ENCODE measurements at regions of chr6 and their contacts with region 1.

Region 1: DNA sequence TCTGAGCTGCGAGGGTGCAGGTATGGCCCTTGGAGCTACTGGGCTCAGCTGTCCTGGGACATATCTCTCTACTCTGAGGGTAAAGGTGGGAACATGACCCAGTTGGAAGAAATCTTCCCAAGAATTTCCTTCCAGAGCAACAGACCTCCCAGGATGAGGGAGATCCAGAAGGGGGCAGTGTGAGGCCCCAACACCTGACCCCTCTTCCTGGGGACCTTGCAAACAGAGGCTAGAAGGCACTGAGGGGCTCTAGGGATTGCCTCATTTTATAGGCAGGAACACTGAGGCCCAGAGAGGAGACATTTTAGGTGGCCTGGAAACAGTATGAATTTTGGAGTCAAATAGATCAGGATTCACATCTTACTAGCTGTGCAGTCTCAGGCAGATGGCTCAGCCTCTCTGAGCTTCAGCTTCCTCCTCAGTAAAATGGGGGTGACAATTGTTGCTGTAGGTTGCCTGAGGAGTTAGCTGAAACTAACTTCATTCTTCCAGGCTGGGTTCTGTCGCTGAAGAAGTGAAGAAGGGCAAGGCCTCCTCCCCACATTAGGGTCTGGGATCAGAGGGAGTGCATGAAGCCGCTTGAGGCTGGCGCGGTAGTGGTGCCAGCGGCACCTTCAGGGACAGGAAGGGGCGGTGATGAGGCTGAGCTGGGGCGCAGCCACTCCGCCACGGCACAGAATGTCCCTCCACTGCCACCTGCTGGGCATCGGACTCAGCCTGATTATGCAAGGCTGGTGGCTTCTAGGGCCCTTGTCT is 11.4 kb downstream of the KCNK17 start:
- DNase-seq: peak; percentile 83 to 90 (median 87)
- H3K4me3 ChIP-seq: peak overlapping the region in 1 of 7 experiments; percentile 55
- H3K27ac ChIP-seq: no peak overlapping the region
- H3K4me1 ChIP-seq: peaks cover 0 to 14% (median 7%) of the 10 kb centered on the region in 4 experiments
- H3K27me3 ChIP-seq: no peaks in the 10 kb centered on the region

Region 2: DNA sequence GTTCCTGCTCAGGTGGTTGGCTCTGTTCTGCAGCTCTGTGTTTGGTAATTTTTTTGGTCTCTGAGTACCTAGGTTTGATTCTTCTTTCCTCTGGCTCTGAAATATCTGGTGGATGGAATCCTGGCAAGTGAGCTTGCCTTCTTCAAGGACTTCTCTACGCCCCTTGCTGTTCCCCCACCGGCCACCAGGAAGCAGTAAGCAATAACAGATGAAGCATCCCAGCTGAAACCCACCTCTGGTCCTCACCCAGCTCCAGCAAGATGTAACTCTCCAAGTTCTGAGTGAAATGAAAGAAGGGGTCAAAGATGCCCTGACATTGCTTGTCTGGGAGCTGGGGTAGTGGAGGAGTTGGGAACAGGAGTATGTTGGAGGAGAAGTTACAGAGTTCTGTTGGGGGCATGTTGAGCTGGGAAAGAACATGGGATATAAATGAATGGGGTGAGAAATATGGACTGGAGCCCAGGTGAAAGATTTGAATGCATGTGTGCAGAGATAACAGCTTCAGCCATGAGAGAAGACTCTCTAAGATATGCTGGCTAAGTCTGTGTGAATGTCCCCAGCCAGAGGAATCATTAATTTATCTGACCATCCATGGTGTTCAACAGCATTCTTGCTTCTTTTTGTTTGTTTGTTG is 305.6 kb before region 1 on chr6:
- CTCF ChIA-PET with region 1: interaction called, 16 read pairs
- POLR2A ChIA-PET with region 1: interaction called, 3 read pairs
- DNase-seq: peak; percentile 60 to 80 (median 73)
- H3K4me3 ChIP-seq: no peak overlapping the region
- H3K27ac ChIP-seq: no peak overlapping the region
- H3K4me1 ChIP-seq: no peaks in the 10 kb centered on the region
- H3K27me3 ChIP-seq: peaks cover 12 to 45% (median 15%) of the 10 kb centered on the region in 5 experiments

Region 3: GRCh38 chr6:39003072-39003471 is 299.8 kb before region 1 on chr6:
- CTCF ChIA-PET with region 1: interaction called, 14 read pairs
- POLR2A ChIA-PET with region 1: no interaction called
- DNase-seq: peak; percentile 11 to 38 (median 30)
- H3K4me3 ChIP-seq: no peak overlapping the region
- H3K27ac ChIP-seq: no peak overlapping the region
- H3K4me1 ChIP-seq: no peaks in the 10 kb centered on the region
- H3K27me3 ChIP-seq: peaks cover 9 to 68% (median 29%) of the 10 kb centered on the region in 5 experiments

Region 4: DNA sequence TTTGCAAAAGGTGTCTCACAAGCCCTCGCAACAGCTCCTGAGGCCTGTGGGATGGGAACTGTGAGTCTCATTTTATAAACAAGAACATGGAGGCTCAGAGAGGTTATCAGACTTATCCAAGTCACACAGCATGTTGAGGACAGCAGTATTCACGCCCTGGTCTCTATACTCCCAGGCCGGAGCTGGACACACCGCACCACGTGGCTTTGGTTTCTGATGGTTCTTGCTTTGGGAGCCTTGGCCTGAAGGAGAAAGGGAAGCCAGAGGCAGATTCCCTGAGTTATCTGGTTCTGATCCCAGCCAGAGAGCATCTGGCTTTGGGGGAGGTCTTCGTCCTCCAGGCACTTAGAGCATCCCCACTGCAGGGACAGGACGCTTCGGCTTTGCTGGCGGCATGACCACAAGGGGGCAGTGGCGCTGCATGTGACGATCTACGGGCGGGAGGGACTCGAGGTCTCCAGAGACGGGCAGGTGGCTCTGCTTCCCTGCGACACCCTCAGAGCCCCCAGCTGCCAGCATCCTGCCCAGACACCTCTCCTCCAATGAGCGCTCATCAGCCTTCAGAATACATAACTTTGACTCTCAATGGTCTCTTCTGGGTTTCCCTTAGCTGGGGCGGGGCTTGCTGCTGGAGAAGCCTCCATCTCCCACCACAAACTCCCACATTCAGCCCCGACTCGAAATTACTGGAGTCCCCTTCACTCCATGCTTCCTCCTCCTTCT is 136.5 kb before region 1 on chr6:
- CTCF ChIA-PET with region 1: interaction called, 251 read pairs
- POLR2A ChIA-PET with region 1: interaction called, 4 read pairs
- DNase-seq: peak; percentile 73 to 89 (median 86)
- H3K4me3 ChIP-seq: no peak overlapping the region
- H3K27ac ChIP-seq: no peak overlapping the region
- H3K4me1 ChIP-seq: peaks cover 0 to 6% (median 1%) of the 10 kb centered on the region in 4 experiments
- H3K27me3 ChIP-seq: peaks cover 0 to 13% (median 0%) of the 10 kb centered on the region in 5 experiments

Region 5: GRCh38 chr6:39189915-39190544 is 112.8 kb before region 1 on chr6:
- CTCF ChIA-PET with region 1: interaction called, 39 read pairs
- POLR2A ChIA-PET with region 1: no interaction called
- DNase-seq: peak in 2 of 3 donors; percentile 21 to 34
- H3K4me3 ChIP-seq: no peak overlapping the region
- H3K27ac ChIP-seq: no peak overlapping the region
- H3K4me1 ChIP-seq: peaks cover 0 to 16% (median 4%) of the 10 kb centered on the region in 4 experiments
- H3K27me3 ChIP-seq: no peaks in the 10 kb centered on the region

Region 6: GRCh38 chr6:39273406-39273821 is 29.4 kb before region 1 on chr6:
- CTCF ChIA-PET with region 1: no interaction called
- POLR2A ChIA-PET with region 1: no interaction called
- DNase-seq: no peak
- H3K4me3 ChIP-seq: no peak overlapping the region
- H3K27ac ChIP-seq: no peak overlapping the region
- H3K4me1 ChIP-seq: no peaks in the 10 kb centered on the region
- H3K27me3 ChIP-seq: no peaks in the 10 kb centered on the region